A549 (cell line): ENCODE measurements at regions of chr15 and their contacts with region 1.

Region 1: DNA sequence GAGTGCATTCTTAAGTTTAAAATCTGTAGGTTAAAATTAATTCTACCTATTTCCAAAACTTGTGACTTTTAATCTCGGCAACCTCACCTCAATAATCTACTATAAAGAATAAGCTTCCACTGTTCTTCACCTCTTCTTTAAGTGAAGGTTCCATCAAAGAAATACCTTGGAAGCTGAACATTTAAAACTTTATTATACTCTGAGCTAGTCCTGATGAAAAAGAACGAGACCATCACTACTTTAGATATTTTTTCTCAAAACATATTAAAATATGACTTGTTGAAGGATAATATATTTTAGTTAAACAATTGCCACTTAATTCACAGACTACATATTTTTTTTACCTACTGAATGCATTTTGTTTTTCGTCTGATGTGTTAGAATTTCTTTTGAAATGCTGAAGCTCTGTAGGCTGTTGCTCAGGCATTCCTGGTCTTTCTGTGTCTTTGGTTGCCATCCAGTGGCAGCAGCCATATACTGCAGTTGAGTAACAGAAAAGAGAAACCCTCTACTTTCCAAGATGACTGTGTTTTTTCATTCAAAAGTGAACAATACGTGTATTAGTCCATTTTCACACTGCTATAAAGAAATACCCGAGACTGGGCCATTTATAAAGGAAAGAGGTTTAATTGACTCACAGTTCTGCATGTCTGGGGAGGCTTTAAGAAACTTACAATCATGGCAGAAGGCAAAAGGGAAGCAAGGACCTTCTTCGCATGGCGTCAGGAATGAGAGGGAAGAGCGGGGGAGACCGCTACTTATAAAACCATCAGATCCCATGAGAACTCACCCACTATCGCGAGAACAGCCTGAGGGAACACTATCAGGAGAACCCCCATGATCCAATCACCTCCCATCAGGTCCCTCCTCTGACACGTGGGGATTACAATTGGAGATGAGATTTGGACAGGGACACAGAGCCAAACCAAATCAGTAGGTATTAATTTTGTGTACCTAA is 4.5 kb upstream of the GOLGA8B start:
- DNase-seq: peak; percentile 71 to 94
- ATAC-seq: peak; percentile 59 to 75
- H3K4me3 ChIP-seq: peak overlapping the region; percentile 34
- H3K27ac ChIP-seq: peak overlapping the region; percentile 53 to 71; a peak in 5 of 6 replicates
- H3K4me1 ChIP-seq: peaks cover 8% of the 10 kb centered on the region
- CTCF ChIP-seq: peak; percentile 94
- EP300 ChIP-seq: no peak
- POLR2A ChIP-seq: peak; percentile 72
- RAD21 ChIP-seq: peak; percentile 92 to 93

Region 2: GRCh38 chr15:33963831-33964664 is 623.9 kb before region 1 on chr15:
- CTCF ChIA-PET with region 1: no interaction called
- POLR2A ChIA-PET with region 1: no interaction called
- DNase-seq: peak; percentile 24 to 49
- ATAC-seq: peak; percentile 88 to 94
- H3K4me3 ChIP-seq: no peak overlapping the region
- H3K27ac ChIP-seq: no peak overlapping the region
- H3K4me1 ChIP-seq: no peaks in the 10 kb centered on the region
- CTCF ChIP-seq: peak; percentile 85
- EP300 ChIP-seq: no peak
- POLR2A ChIP-seq: no peak
- RAD21 ChIP-seq: peak; percentile 71 to 79

Region 3: GRCh38 chr15:34055853-34056595 is 532.0 kb before region 1 on chr15:
- CTCF ChIA-PET with region 1: interaction called, 10 read pairs
- POLR2A ChIA-PET with region 1: no interaction called
- DNase-seq: no peak
- ATAC-seq: peak; percentile 60 to 76; a peak in 5 of 6 replicates
- H3K4me3 ChIP-seq: no peak overlapping the region
- H3K27ac ChIP-seq: no peak overlapping the region
- H3K4me1 ChIP-seq: 0 out of 3 replicates have a peak, but pooled peaks cover 4% of the 10 kb centered on the region
- CTCF ChIP-seq: no peak
- EP300 ChIP-seq: no peak
- POLR2A ChIP-seq: no peak
- RAD21 ChIP-seq: no peak

Region 4: DNA sequence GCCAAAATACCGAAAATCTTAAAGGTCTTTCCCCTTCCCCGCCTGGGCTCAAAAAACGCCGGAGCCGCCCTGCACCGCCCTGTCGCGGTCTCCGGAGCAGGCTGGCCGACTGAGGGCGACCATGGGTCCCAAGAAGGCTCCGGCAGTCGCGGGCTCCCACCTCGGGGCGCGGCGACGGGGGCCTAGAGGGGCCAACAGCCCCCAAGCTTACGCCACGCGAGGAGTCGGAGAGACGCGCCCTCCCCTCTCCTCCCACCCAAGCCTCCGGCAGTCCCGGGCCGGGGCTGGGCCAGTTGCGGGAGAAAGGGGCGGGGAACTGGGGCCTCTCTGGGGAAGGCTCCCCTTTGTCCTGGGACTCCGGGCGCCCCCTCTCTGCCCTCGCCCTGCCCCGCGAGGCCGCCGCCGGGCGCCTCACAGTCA is 73.7 kb before region 1 on chr15:
- CTCF ChIA-PET with region 1: interaction called, 10 read pairs
- POLR2A ChIA-PET with region 1: no interaction called
- DNase-seq: peak; percentile 21 to 38
- ATAC-seq: peak; percentile 82 to 88
- H3K4me3 ChIP-seq: peak overlapping the region; percentile 71
- H3K27ac ChIP-seq: peak overlapping the region; percentile 52 to 64; a peak in 5 of 6 replicates
- H3K4me1 ChIP-seq: 0 out of 3 replicates have a peak, but pooled peaks cover 5% of the 10 kb centered on the region
- CTCF ChIP-seq: no peak
- EP300 ChIP-seq: no peak
- POLR2A ChIP-seq: no peak
- RAD21 ChIP-seq: no peak